Dorsolateral prefrontal cortex (tissue), 120 donors: ENCODE measurements at regions of chr10 and their contacts with region 1.

Region 1: GRCh38 chr10:6202684-6203330 is at the start of gene PFKFB3:
- DNase-seq: peak; percentile 82 to 98 (median 97)
- H3K4me3 ChIP-seq: peak within 1 kb of the TSS; percentile 58 to 99 (median 85)
- H3K27ac ChIP-seq: peak within 1 kb of the TSS; percentile 66 to 99 (median 95)
- H3K27me3 ChIP-seq: no peaks in the 10 kb centered on the region
- CTCF ChIP-seq: peak; percentile 93 to 100 (median 98)
- total RNA-seq, gene PFKFB3: 82.4 to 323 (median 122) TPM

Region 2: GRCh38 chr10:5948999-5949759 is 253.6 kb before region 1 on chr10:
- intact Hi-C with region 1: loop called in 1 of 2 experiments (anchors 10 kb)
- DNase-seq: peak in 9 of 10 donors; percentile 17 to 84 (median 74)
- H3K4me3 ChIP-seq: no peak overlapping the region
- H3K27ac ChIP-seq: no peak overlapping the region
- H3K27me3 ChIP-seq: no peaks in the 10 kb centered on the region
- CTCF ChIP-seq: peak in 54 of 56 donors; percentile 32 to 73 (median 56)

Region 3: DNA sequence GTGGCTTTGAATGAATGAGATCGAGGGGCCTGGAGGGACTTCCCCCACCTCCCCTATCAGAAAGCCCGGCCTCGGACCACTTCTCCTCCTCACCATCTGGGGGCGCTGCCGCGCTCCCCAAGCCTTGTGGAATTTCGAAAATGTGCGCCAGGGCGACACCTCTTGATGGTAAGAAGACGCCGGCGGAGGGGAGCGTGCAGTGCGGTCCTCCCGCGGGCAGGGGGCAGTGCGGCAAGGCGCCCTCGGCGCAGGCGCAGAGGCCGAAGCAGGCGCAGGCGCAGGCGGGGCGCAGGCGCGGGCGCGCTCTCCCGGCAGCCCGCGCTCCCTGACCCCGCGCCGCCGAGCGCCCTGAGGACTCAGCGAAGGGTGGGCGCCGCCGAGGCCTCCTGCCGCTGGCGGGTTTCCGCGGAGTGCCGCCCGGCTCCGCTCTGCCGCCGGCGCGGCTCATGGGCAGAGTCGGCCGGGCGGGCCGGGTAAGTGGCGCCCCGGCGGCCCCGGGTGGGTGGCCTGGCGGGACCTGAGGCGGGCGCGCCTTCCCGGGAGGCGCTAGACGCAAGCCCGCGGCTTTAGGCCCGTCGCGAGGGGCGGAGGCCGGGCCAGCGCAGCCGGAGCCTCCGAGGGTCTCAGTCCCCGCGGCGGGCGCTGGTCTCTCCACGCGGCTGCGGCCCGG is 114.0 kb before region 1 on chr10 and contains the start of gene RBM17:
- intact Hi-C with region 1: loop called in 1 of 2 experiments (anchors 5 kb)
- DNase-seq: peak; percentile 76 to 96 (median 92)
- H3K4me3 ChIP-seq: peak within 1 kb of the TSS; percentile 71 to 100 (median 91)
- H3K27ac ChIP-seq: peak within 1 kb of the TSS in 55 of 59 donors; percentile 22 to 96 (median 79)
- H3K27me3 ChIP-seq: no peaks in the 10 kb centered on the region
- CTCF ChIP-seq: peak; percentile 93 to 100 (median 100)
- total RNA-seq, gene RBM17: 67.3 to 155 (median 95.4) TPM

Region 4: DNA sequence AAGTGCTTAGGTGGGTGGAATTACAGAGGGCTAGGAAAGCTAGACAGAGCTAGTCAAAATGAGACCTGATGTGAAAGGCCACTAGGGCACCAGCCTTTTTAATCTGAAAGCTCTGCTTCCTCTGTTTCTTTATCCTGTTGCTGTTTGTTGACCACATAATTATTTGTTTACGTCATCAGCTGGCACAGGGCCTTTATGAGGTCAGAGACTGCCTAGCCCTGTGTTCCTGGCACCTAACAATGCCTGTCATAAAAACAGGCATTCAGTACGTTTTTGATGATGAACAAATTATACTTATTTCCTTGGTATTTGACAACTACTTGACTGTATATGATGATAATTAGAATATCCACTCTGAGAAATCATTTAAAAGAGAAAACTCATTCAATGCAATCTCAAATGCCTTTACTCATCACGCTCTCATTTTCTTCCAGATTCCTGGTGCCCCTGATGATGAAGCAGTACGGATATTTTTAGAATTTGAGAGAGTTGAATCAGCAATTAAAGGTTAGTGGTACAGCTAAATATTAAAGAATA is 87.9 kb before region 1 on chr10:
- intact Hi-C with region 1: loop called in 1 of 2 experiments (anchors 5 kb)
- DNase-seq: peak in 2 of 10 donors; percentile 49 to 71
- H3K4me3 ChIP-seq: peak overlapping the region in 2 of 59 donors; percentile 4 to 17
- H3K27ac ChIP-seq: peak overlapping the region; percentile 21 to 94 (median 81)
- H3K27me3 ChIP-seq: no peaks in the 10 kb centered on the region
- CTCF ChIP-seq: peak in 7 of 56 donors; percentile 7 to 26 (median 14)

Region 5: DNA sequence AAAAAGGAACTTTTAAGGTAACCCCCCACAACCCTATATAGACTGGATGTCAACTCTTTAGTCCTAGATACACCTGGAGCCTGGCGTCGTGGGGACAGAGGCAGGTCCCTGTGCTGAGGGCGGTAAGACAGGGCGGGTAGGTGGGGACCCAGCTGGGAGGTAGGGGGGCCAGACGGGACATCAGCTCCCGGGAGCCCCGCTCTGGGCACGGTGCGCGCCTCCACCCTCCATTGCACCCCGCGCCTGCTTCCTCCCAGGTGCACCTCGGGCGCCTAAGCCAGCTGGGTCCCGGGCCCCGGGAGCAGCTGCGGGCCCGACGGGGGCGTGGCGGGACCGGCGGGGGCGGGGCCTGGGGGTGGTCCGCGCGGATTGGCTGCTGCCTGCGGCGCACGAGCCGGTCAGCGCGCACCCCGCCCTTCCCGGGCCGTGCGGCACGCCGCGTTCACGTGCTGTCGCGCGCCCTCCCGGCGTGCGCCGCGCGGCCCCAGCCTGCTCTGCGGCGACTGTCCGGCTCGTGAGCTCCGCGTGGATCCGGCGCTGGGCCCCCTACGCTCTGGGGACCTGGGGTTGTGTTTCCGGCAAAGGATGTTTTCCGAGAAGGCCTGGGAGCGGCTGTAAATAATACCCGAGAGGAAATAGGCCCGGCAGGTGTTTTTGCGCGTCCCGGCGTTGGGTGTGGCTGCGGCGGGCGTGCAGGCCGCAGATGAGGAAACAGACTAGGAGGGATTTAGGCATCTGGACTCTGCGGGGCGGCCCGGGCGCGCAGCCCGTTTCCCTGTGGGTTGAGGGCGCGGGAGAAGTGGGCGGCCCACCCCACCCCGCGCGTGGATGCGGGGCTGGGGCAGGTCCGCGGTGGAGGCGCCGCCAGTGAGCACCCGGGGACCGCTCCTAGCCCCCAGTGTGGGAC is 39.2 kb before region 1 on chr10:
- intact Hi-C with region 1: loop called (anchors 1 to 2 kb)
- DNase-seq: peak; percentile 63 to 96 (median 82)
- H3K4me3 ChIP-seq: peak overlapping the region; percentile 62 to 96 (median 87)
- H3K27ac ChIP-seq: peak overlapping the region; percentile 71 to 96 (median 91)
- H3K27me3 ChIP-seq: no peaks in the 10 kb centered on the region
- CTCF ChIP-seq: peak in 19 of 56 donors; percentile 9 to 49 (median 19)

Region 6: DNA sequence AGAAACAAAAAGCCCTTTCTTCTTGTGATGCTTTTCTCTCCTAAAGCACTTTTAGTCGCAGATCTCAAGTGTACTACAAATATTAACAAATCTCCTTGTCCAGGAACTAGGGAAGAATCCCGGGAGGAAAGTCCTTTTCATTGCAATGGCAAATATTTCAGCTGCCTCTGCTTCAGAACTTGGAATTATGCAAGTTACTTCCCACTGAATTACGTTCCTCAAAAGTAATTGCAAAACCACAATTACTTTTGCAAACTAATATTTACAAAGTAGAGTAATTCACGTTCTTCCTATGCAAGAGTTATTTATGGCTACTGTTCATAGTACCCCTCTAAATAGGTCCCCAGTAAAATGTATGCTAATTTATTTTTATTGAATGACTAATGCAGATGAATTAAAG is 362.8 kb after region 1 on chr10:
- intact Hi-C with region 1: no loop called
- DNase-seq: no peak
- H3K4me3 ChIP-seq: no peak overlapping the region
- H3K27ac ChIP-seq: no peak overlapping the region
- H3K27me3 ChIP-seq: peaks cover 0 to 4% (median 0%) of the 10 kb centered on the region in 45 donors
- CTCF ChIP-seq: no peak